ENCODE measurements at regions of chr14 and their contacts with region 1.

Region 1: DNA sequence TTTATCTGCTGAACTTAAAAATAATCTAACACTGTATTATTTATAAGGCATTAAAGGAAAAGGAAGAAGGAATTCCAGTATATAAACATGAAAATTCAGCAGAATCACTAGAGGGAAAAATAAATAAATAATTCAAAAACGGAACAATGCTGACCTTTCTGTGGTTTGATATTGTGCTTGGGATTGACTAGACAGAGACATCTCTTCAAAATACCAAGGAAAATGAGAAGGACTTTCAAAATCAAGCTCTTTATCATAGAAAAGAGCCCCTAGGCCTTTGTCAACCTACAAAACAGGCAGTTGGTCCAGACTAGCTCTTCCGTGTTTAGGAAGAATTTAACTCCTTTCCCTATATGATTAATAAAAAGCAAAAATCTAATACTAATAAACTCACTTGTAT is 6.3 kb upstream of the FLRT2 start:
- DNase-seq: no peak
- H3K4me3 ChIP-seq: no peak overlapping the region
- H3K27ac ChIP-seq: no peak overlapping the region
- H3K4me1 ChIP-seq: no peaks in the 10 kb centered on the region
- H3K27me3 ChIP-seq: no peaks in the 10 kb centered on the region
- CTCF ChIP-seq: no peak
- EP300 ChIP-seq: no peak
- POLR2A ChIP-seq: no peak

Region 2: DNA sequence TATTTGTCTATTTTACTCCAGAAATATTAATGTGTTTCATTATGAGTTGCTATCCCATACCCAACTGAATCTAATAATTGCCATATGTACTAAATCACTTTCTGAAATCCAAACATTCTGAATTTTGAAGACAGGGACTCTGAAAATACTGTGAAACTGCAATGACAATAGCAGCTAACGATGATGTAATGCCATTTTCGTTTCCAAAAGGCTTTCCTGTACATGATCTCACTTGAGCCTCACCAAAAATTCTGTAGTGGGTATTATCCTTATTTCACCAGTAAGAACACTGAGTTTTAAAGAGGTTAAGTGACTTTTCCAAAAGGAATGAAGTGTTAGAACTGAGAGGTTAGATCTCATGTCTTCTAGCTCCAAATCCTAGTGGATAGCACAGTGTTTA is 139.6 kb after region 1 on chr14:
- intact Hi-C with region 1: loop called in 1 of 4 experiments (anchors 2 kb)
- DNase-seq: no peak
- H3K4me3 ChIP-seq: no peak overlapping the region
- H3K27ac ChIP-seq: no peak overlapping the region
- H3K4me1 ChIP-seq: no peaks in the 10 kb centered on the region
- H3K27me3 ChIP-seq: no peaks in the 10 kb centered on the region
- CTCF ChIP-seq: no peak
- EP300 ChIP-seq: no peak
- POLR2A ChIP-seq: no peak